Activated CD4-positive, alpha-beta memory T cell treated with anti-CD3 and anti-CD28 coated beads, Interleukin-2, amount 10 ng/mL, durations not matched to agents 7 days and 5 days (primary cell): ENCODE measurements at regions of chr1 and their contacts with region 1.

Region 1: GRCh38 chr1:9292361-9293240 is at the start of gene SPSB1:
- DNase-seq: peak; percentile 79
- H3K4me3 Mint-ChIP-seq: peak within 1 kb of the TSS; percentile 56
- H3K27ac Mint-ChIP-seq: no peak within 1 kb of the TSS
- H3K4me1 Mint-ChIP-seq: peaks cover 22% of the 10 kb centered on the region
- H3K27me3 Mint-ChIP-seq: peaks cover 7% of the 10 kb centered on the region
- total RNA-seq, gene SPSB1: 17.4 to 18.0 TPM

Region 2: GRCh38 chr1:9275567-9276034 is 17.0 kb before region 1 on chr1:
- CTCF ChIA-PET with region 1: interaction called, 17 read pairs
- POLR2A ChIA-PET with region 1: interaction called, 11 read pairs
- DNase-seq: peak; percentile 90
- H3K4me3 Mint-ChIP-seq: peak overlapping the region; percentile 43
- H3K27ac Mint-ChIP-seq: peak overlapping the region; percentile 82
- H3K4me1 Mint-ChIP-seq: peaks cover 40% of the 10 kb centered on the region
- H3K27me3 Mint-ChIP-seq: peaks cover 9% of the 10 kb centered on the region

Region 3: DNA sequence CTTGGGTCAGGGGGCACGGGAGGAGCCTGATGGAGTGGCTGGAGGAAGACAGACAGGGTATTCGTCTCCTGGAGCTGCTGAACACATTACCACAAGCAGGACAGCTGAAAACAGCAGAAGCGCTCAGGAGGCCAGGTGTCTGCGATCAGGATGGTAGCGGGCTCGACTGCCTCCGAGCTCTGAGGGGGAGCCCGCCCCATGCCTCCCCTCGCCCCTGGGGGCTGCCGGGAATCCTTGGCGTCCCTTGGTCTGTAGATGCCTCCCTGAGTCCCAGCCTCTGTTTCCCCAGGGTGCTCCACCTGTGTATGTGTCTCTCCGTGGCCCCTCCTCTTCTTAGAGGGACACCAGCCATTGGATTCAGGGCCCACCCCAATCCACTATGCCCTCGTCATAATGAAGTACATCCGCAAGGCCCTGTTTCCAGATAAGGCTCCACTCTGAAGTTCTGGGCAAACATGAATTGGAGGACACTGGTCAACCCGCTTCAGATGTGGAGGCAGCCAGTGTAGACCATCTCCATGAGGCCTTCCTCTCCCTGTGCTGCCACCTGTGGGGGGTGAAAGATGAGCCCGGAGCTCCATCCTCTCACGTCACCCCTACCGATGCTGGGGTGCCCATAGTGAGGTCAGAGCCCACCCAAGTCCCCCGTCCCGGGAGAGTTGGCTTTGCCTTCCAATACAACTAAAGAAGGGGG is 67.9 kb after region 1 on chr1:
- CTCF ChIA-PET with region 1: no interaction called
- POLR2A ChIA-PET with region 1: no interaction called
- DNase-seq: no peak
- H3K4me3 Mint-ChIP-seq: no peak overlapping the region
- H3K27ac Mint-ChIP-seq: no peak overlapping the region
- H3K4me1 Mint-ChIP-seq: no peaks in the 10 kb centered on the region
- H3K27me3 Mint-ChIP-seq: no peaks in the 10 kb centered on the region

Region 4: GRCh38 chr1:9455487-9456234 is 163.1 kb after region 1 on chr1:
- CTCF ChIA-PET with region 1: interaction called, 51 read pairs
- POLR2A ChIA-PET with region 1: interaction called, 8 read pairs
- DNase-seq: peak; percentile 66
- H3K4me3 Mint-ChIP-seq: no peak overlapping the region
- H3K27ac Mint-ChIP-seq: no peak overlapping the region
- H3K4me1 Mint-ChIP-seq: no peaks in the 10 kb centered on the region
- H3K27me3 Mint-ChIP-seq: peaks cover 25% of the 10 kb centered on the region

Region 5: GRCh38 chr1:9494929-9495758 is 202.5 kb after region 1 on chr1:
- CTCF ChIA-PET with region 1: interaction called, 46 read pairs
- POLR2A ChIA-PET with region 1: interaction called, 7 read pairs
- DNase-seq: peak; percentile 69
- H3K4me3 Mint-ChIP-seq: peak overlapping the region; percentile 56
- H3K27ac Mint-ChIP-seq: no peak overlapping the region
- H3K4me1 Mint-ChIP-seq: peaks cover 17% of the 10 kb centered on the region
- H3K27me3 Mint-ChIP-seq: peaks cover 17% of the 10 kb centered on the region